Prostate gland (tissue), 2 donors: ENCODE measurements at regions of chr1 and their contacts with region 1.

Region 1: DNA sequence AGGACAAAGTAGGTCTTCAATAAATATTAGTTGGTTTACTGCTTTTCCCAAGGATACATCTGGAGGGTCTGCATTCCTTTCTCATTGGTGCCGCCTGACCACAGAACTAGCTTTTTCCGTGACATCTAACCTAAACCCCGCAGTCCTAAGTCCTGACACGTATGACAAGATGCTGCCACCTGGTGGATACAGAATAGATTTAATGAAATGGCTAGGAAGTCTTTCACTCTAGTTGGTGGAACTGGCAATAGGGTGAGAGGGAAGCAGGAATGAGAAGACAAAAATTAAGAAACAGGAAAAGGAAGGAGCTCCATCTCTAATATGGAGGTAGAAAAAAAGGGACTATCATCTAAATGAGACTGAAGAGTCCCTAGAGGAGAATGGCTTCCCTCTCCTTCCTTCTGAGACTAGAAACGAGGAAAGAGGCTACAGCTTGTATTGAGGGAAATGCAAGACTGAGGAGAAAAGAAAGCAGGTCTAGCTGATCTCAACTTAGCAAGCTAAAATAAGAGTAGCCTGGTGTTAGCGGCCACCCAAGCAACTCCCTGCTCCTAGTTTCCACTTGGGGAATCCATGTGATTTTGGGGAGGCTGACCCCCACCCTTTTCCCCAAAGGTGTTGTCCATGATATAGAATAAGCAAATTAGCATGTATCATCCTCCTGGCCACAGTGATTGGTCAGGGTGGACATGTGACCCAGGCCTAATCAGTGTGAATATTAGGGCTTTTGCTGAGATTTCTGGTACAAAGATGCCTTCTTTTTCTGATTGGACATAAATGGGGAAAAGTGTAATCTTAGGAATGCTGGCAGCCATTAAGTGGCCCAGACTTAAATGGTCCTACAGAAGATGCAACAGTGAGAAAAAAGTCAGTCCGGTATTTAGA is 5.9 kb downstream of the RFX5 start:
- DNase-seq: peak; percentile 62
- H3K4me3 ChIP-seq: no peak overlapping the region
- H3K27ac ChIP-seq: no peak overlapping the region
- H3K4me1 ChIP-seq: peaks cover 2% of the 10 kb centered on the region
- H3K27me3 ChIP-seq: no peaks in the 10 kb centered on the region
- CTCF ChIP-seq: peak; percentile 37 to 77 (median 74)
- POLR2A ChIP-seq: no peak

Region 2: GRCh38 chr1:151281969-151282882 is 58.9 kb before region 1 on chr1 and contains the start of gene ZNF687:
- intact Hi-C with region 1: loop called (anchors 5 kb)
- DNase-seq: peak; percentile 100
- H3K4me3 ChIP-seq: peak within 1 kb of the TSS; percentile 68 to 73
- H3K27ac ChIP-seq: peak within 1 kb of the TSS; percentile 98 to 99
- H3K4me1 ChIP-seq: no peaks in the 10 kb centered on the region
- H3K27me3 ChIP-seq: no peaks in the 10 kb centered on the region
- CTCF ChIP-seq: no peak
- POLR2A ChIP-seq: peak; percentile 71
- total RNA-seq, gene ZNF687: 30.1 to 46.4 TPM

Region 3: DNA sequence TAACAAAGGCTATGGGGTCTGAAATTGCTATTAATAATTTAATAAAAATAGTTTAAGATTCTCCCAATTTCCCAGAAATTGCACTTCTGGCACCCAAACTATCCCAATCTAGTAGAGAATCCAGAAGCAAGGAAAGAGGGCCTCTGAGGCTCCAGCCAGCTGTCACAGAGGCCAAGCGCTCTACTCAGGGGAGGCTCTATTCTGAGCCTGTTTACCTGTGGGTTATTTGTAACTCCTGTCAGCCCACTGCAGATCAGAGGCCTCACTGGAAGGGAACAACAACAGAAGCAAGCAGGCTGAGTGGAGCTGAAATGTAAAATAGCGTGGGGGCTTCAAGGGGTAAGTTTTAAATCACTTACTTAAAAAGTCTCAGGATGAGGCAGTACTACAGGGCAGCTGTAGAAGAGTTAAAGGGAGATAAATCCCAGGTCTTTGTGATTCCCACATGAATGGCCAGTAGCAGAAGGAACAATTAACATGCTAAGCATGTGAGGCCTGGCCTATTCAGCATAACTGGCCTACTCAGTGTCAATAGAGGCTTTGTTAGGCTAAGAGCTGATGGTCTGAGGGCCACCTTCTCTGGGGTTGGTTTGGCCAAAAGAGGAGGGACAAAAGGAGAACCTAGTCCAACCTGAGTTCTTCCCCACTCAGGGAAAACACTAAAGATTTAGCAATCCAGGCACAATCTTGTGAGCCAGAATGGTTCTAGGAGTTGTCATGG is 46.2 kb before region 1 on chr1:
- intact Hi-C with region 1: loop called (anchors 5 kb)
- DNase-seq: no peak
- H3K4me3 ChIP-seq: no peak overlapping the region
- H3K27ac ChIP-seq: no peak overlapping the region
- H3K4me1 ChIP-seq: no peaks in the 10 kb centered on the region
- H3K27me3 ChIP-seq: no peaks in the 10 kb centered on the region
- CTCF ChIP-seq: no peak
- POLR2A ChIP-seq: no peak